ENCODE measurements at regions of chr5 and their contacts with region 1.

Region 1: DNA sequence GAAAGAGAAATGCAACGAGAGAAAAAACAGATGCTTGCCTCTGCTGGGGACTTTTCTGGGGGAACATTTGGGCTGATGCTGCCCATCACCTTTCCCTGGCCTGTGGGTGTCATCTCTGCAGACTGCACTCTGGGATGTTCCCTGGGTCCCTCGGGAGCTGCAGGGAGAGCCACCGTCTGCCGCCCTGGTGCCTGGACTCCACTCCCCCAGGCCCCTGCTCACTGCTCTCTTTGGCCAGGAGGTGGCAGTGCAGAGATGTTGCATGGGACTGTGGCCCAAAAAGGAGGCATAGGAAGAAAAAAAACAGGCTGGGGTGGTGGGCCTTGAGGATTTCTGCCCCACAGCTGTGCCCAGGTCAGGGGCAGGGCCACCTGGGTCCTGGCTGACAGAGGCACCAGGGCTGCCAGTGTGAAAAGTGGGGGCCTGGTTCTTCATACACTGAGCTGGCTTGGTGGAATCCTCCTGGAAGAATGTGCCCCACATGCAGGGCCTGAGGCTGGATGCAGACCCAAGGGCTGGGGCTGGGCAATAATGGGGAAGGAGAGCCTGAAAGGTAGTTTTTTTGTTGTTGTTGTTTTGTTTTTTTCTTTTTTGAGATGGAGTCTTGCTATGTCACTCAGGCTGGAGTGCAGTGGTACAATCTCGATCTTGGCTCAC is 353.6 kb downstream of the SLIT3 start:
- DNase-seq: peak; percentile 36 to 75 (median 73)
- ATAC-seq: peak; percentile 43 to 64
- H3K4me3 ChIP-seq: no peak overlapping the region
- H3K27ac ChIP-seq: no peak overlapping the region
- H3K4me1 ChIP-seq: no peaks in the 10 kb centered on the region
- H3K27me3 ChIP-seq: no peaks in the 10 kb centered on the region

Region 2: GRCh38 chr5:168706655-168707069 is 240.7 kb before region 1 on chr5:
- intact Hi-C with region 1: loop called in 1 of 4 experiments (anchors 10 kb)
- DNase-seq: peak in 2 of 3 donors; percentile 44 to 75
- ATAC-seq: peak; percentile 47 to 75
- H3K4me3 ChIP-seq: no peak overlapping the region
- H3K27ac ChIP-seq: no peak overlapping the region
- H3K4me1 ChIP-seq: no peaks in the 10 kb centered on the region
- H3K27me3 ChIP-seq: no peaks in the 10 kb centered on the region